Activated CD4-positive, alpha-beta T cell treated with anti-CD3 and anti-CD28 coated beads, Interleukin-2, amount 10 ng/mL, durations not matched to agents 24 days and 14 days (primary cell): ENCODE measurements at regions of chrX and their contacts with region 1.

Region 1: DNA sequence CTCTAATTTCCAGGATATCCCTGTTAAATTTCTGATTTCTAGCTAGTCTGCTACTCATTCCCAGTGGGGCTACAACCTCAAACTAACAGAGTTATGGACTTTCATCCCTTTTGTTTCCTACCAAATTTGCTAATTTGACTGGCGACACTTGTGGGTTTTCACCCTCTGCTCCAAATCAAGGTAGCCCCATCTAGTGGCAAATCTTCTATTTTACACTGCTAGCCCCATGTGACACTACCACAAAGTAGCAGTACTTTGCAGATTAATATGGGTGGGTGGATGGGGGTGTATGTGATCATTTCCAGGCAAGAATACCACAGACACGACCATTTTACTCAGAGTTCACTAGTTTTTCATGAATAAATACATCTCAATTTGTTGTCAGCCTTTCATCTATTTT is 150.3 kb downstream of the MSL3 start:
- DNase-seq: peak; percentile 67
- H3K4me3 Mint-ChIP-seq: no peak overlapping the region
- H3K27ac Mint-ChIP-seq: no peak overlapping the region
- H3K4me1 Mint-ChIP-seq: peaks cover 3% of the 10 kb centered on the region
- H3K27me3 Mint-ChIP-seq: no peaks in the 10 kb centered on the region

Region 2: DNA sequence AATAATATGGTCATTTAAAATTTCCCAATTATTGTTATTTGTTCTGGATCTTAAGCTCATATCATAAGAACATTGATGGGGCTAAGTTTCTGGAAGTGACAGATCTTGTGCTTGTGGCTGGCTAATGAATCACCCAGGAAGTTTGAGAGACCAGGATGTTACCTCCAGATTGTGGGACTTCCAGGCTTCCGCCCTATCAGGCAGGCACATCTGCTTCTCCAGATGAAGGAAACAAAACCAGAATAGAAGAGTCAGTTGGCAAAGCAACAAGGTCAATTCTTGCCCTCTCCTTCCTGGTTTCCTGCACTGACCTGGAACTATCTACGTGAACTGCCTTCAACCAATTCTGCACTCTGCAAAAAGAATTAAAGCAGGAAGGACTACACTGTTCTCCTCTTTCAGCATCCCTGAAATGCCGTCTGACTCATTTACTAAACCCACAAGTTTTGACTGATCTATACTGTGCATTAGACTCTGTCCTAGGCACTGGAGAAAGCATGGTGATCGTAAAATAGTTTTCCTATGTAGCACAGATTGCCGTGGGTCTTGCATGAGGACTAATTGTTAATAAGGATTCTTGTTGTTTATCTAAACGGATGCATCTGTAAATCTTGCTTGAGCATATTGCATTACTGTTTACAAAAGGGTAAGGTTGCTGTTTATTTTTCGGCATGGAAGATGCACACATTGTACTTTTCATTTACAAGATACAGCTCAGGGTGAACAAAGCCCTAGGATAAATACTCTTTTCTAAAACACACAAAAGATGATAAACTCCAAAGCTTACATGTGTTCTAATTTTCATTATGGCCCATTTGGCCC is 540.6 kb before region 1 on chrX:
- intact Hi-C with region 1: no loop called
- DNase-seq: no peak
- H3K4me3 Mint-ChIP-seq: no peak overlapping the region
- H3K27ac Mint-ChIP-seq: no peak overlapping the region
- H3K4me1 Mint-ChIP-seq: no peaks in the 10 kb centered on the region
- H3K27me3 Mint-ChIP-seq: no peaks in the 10 kb centered on the region

Region 3: DNA sequence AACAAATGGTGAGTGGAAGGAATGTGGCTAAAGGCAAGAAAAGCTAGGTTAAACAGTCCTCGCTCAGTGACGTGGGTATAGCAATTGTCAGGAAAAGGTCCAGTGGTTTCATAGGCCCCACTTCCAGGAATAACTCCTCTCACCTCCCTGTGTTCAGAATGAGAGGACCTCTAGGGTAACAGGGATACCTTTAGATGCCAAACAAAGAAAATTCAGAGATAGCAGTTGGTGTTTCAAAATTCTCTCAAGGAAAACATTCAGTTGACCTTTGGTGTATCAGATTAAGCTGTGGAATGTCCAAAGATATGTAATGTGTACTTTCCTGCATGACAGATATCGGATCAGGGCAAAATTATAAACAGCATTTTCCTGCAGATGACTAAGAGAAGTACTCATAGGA is 398.6 kb before region 1 on chrX:
- intact Hi-C with region 1: no loop called
- DNase-seq: no peak
- H3K4me3 Mint-ChIP-seq: no peak overlapping the region
- H3K27ac Mint-ChIP-seq: no peak overlapping the region
- H3K4me1 Mint-ChIP-seq: no peaks in the 10 kb centered on the region
- H3K27me3 Mint-ChIP-seq: no peaks in the 10 kb centered on the region

Region 4: GRCh38 chrX:11770320-11770719 is 138.1 kb before region 1 on chrX:
- intact Hi-C with region 1: loop called (anchors 5 kb)
- DNase-seq: peak; percentile 82
- H3K4me3 Mint-ChIP-seq: peak overlapping the region; percentile 52
- H3K27ac Mint-ChIP-seq: peak overlapping the region; percentile 84
- H3K4me1 Mint-ChIP-seq: peaks cover 23% of the 10 kb centered on the region
- H3K27me3 Mint-ChIP-seq: no peaks in the 10 kb centered on the region

Region 5: GRCh38 chrX:11787564-11787963 is 120.8 kb before region 1 on chrX:
- intact Hi-C with region 1: loop called (anchors 1 kb)
- DNase-seq: peak; percentile 89
- H3K4me3 Mint-ChIP-seq: peak overlapping the region; percentile 70
- H3K27ac Mint-ChIP-seq: no peak overlapping the region
- H3K4me1 Mint-ChIP-seq: peaks cover 7% of the 10 kb centered on the region
- H3K27me3 Mint-ChIP-seq: no peaks in the 10 kb centered on the region

Region 6: DNA sequence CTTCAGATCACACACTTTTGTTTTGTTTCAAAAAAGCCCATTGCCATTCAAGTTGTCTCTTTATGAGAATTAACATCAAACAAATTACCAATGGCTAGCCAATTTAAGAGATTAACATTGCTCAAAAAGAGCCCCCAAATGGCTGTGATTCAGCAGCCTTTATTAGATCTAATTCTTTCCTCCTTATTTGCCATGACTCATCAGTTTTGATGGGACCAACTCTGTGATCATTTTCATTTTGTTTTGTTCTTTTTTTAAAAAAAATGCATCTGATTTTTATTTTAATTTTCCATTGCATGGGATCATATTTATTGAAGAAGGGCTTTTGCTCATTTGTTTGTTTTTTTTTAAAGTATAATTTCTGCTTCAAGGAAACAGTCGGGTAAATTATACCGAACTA is 68.3 kb after region 1 on chrX:
- intact Hi-C with region 1: no loop called
- DNase-seq: no peak
- H3K4me3 Mint-ChIP-seq: no peak overlapping the region
- H3K27ac Mint-ChIP-seq: no peak overlapping the region
- H3K4me1 Mint-ChIP-seq: no peaks in the 10 kb centered on the region
- H3K27me3 Mint-ChIP-seq: no peaks in the 10 kb centered on the region